ENCODE measurements at regions of chr19 and their contacts with region 1.

Region 1: DNA sequence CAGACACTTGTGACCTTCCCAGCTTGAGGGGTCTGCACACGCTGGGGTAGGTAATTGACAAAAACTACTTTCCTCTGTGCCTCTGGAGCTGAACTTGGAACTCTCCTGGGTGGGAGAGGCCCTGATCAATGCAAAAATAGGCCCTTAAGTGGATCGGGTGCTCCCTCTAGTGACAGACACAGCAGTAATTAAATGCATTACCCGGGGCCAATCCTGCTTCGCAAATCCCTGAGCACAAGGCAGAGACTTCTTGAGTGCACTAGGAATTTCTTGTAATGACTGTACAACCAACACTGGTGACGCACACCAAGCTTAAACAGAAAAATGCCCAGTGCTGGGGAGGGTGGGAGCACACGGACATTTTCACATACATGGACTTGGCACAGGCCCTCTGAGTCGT is 10.6 kb upstream of the UBE2S start:
- DNase-seq: no peak
- ATAC-seq: peak; percentile 89
- H3K4me3 ChIP-seq: no peak overlapping the region
- H3K27ac ChIP-seq: no peak overlapping the region
- H3K4me1 ChIP-seq: no peaks in the 10 kb centered on the region
- H3K27me3 ChIP-seq: no peaks in the 10 kb centered on the region
- CTCF ChIP-seq: peak; percentile 64 to 88 (median 75)
- EP300 ChIP-seq: no peak
- POLR2A ChIP-seq: no peak
- RAD21 ChIP-seq: peak; percentile 89

Region 2: GRCh38 chr19:55146078-55146704 is 272.0 kb before region 1 on chr19:
- CTCF ChIA-PET with region 1: interaction called, 7 read pairs
- POLR2A ChIA-PET with region 1: no interaction called
- RAD21 ChIA-PET with region 1: interaction called, 4 read pairs
- SMC1A ChIA-PET with region 1: no interaction called
- in situ Hi-C with region 1: loop called (anchors 5 kb)
- intact Hi-C with region 1: loop called (anchors 1 kb)
- DNase-seq: no peak
- ATAC-seq: peak; percentile 68
- H3K4me3 ChIP-seq: no peak overlapping the region
- H3K27ac ChIP-seq: no peak overlapping the region
- H3K4me1 ChIP-seq: no peaks in the 10 kb centered on the region
- H3K27me3 ChIP-seq: no peaks in the 10 kb centered on the region; a peak in 2 of 4 replicates
- CTCF ChIP-seq: peak; percentile 37 to 70 (median 45)
- EP300 ChIP-seq: no peak
- POLR2A ChIP-seq: no peak
- RAD21 ChIP-seq: peak; percentile 38; the same call in 1 of the 2 replicates

Region 3: DNA sequence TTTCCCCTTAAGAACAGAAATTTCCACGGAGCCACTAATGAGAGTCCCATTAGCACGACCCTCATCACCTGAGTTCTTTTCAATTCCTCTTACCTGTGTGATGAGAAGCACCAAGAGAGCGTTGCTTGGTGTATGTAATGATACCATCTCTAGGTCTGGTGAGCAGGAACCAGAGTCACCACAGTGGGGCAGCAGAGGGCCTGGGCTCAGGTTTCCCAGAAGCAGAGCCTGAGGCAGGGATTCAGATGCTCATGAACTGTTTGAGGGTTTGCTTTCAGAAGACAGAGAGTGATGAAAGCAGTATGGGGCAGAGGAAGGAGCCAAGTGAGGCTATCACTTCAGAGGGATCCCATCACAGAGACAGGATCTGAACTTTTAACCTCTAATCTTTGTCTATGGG is 205.7 kb before region 1 on chr19:
- CTCF ChIA-PET with region 1: interaction called, 3 read pairs
- POLR2A ChIA-PET with region 1: interaction called, 3 read pairs
- RAD21 ChIA-PET with region 1: interaction called, 5 read pairs
- SMC1A ChIA-PET with region 1: interaction called, 3 read pairs
- in situ Hi-C with region 1: loop called (anchors 5 kb)
- intact Hi-C with region 1: loop called (anchors 1 kb)
- DNase-seq: peak; percentile 13
- ATAC-seq: peak; percentile 95
- H3K4me3 ChIP-seq: no peak overlapping the region
- H3K27ac ChIP-seq: no peak overlapping the region
- H3K4me1 ChIP-seq: no peaks in the 10 kb centered on the region
- H3K27me3 ChIP-seq: no peaks in the 10 kb centered on the region
- CTCF ChIP-seq: peak; percentile 59 to 78 (median 73)
- EP300 ChIP-seq: no peak
- POLR2A ChIP-seq: no peak
- RAD21 ChIP-seq: peak; percentile 80

Region 4: GRCh38 chr19:55289117-55289796 is 128.9 kb before region 1 on chr19:
- CTCF ChIA-PET with region 1: interaction called, 8 read pairs
- POLR2A ChIA-PET with region 1: no interaction called
- RAD21 ChIA-PET with region 1: interaction called, 8 read pairs
- SMC1A ChIA-PET with region 1: interaction called, 4 read pairs
- in situ Hi-C with region 1: no loop called
- intact Hi-C with region 1: loop called (anchors 2 kb)
- DNase-seq: no peak
- ATAC-seq: no peak
- H3K4me3 ChIP-seq: no peak overlapping the region
- H3K27ac ChIP-seq: no peak overlapping the region
- H3K4me1 ChIP-seq: no peaks in the 10 kb centered on the region
- H3K27me3 ChIP-seq: no peaks in the 10 kb centered on the region
- CTCF ChIP-seq: no peak
- EP300 ChIP-seq: no peak
- POLR2A ChIP-seq: no peak
- RAD21 ChIP-seq: no peak